H1 (cell line): ENCODE measurements at regions of chr2 and their contacts with region 1.

Region 1: DNA sequence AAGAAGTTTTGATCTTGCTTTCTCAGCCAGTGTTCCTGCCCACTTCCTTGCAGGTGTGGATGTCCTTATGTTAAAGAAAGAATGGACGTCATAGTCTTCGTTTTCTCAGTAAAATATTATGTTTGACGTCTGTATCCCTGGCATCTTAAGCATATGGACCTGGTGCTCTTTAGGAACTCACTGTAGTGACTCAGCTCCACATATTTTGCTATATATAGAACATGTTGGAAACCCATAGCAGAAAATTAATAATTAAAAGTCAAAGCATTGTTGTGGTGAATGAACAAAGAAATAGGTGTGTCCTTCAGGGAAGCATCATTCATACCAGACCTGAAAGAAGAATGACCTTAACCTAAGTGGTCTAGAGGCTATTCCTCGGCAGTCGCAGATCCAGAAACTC is 196.1 kb downstream of the MCFD2 start:
- DNase-seq: no peak
- H3K4me3 ChIP-seq: no peak overlapping the region
- H3K27ac ChIP-seq: no peak overlapping the region
- H3K4me1 ChIP-seq: peaks cover 0 to 8% (median 3%) of the 10 kb centered on the region in 4 experiments; a peak in 4 of 7 replicates
- H3K27me3 ChIP-seq: no peaks in the 10 kb centered on the region
- CTCF ChIP-seq: no peak
- EP300 ChIP-seq: no peak
- POLR2A ChIP-seq: no peak
- RAD21 ChIP-seq: no peak

Region 2: GRCh38 chr2:46446871-46447568 is 272.5 kb before region 1 on chr2:
- CTCF ChIA-PET with region 1: no interaction called
- POLR2A ChIA-PET with region 1: no interaction called
- DNase-seq: no peak
- H3K4me3 ChIP-seq: no peak overlapping the region
- H3K27ac ChIP-seq: no peak overlapping the region
- H3K4me1 ChIP-seq: no peaks in the 10 kb centered on the region
- H3K27me3 ChIP-seq: no peaks in the 10 kb centered on the region
- CTCF ChIP-seq: no peak
- EP300 ChIP-seq: no peak
- POLR2A ChIP-seq: no peak
- RAD21 ChIP-seq: no peak

Region 3: DNA sequence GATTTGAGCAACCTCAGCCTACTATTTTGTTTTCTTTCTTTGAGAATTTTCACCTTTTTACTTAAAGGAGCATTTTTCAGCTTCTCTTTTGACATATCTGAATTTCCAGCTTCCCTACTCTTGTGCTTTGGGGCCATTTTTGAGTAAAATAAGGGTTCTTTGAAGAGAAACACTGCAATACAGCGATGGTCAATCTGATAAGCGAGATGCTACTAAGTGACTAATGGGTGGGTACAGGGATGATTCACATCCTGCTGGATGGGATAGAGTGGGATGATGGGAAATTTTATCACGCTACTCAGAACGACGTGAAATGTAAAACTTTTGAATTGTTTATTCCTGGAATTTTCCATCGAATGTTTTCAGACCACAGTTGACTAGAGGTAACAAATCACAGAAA is 28.7 kb before region 1 on chr2:
- CTCF ChIA-PET with region 1: no interaction called
- POLR2A ChIA-PET with region 1: no interaction called
- DNase-seq: no peak
- H3K4me3 ChIP-seq: no peak overlapping the region
- H3K27ac ChIP-seq: no peak overlapping the region
- H3K4me1 ChIP-seq: no peaks in the 10 kb centered on the region
- H3K27me3 ChIP-seq: no peaks in the 10 kb centered on the region
- CTCF ChIP-seq: no peak
- EP300 ChIP-seq: no peak
- POLR2A ChIP-seq: no peak
- RAD21 ChIP-seq: no peak

Region 4: GRCh38 chr2:46706264-46706983 is 13.1 kb before region 1 on chr2:
- CTCF ChIA-PET with region 1: interaction called, 5 read pairs
- POLR2A ChIA-PET with region 1: interaction called, 28 read pairs
- DNase-seq: no peak
- H3K4me3 ChIP-seq: peak overlapping the region in 1 of 4 experiments; percentile 52; a peak in 1 of 8 replicates
- H3K27ac ChIP-seq: no peak overlapping the region
- H3K4me1 ChIP-seq: peaks cover 5 to 47% (median 16%) of the 10 kb centered on the region in 4 experiments
- H3K27me3 ChIP-seq: no peaks in the 10 kb centered on the region
- CTCF ChIP-seq: no peak
- EP300 ChIP-seq: no peak
- POLR2A ChIP-seq: no peak
- RAD21 ChIP-seq: no peak